ENCODE measurements at regions of chr17 and their contacts with region 1.

Region 1: DNA sequence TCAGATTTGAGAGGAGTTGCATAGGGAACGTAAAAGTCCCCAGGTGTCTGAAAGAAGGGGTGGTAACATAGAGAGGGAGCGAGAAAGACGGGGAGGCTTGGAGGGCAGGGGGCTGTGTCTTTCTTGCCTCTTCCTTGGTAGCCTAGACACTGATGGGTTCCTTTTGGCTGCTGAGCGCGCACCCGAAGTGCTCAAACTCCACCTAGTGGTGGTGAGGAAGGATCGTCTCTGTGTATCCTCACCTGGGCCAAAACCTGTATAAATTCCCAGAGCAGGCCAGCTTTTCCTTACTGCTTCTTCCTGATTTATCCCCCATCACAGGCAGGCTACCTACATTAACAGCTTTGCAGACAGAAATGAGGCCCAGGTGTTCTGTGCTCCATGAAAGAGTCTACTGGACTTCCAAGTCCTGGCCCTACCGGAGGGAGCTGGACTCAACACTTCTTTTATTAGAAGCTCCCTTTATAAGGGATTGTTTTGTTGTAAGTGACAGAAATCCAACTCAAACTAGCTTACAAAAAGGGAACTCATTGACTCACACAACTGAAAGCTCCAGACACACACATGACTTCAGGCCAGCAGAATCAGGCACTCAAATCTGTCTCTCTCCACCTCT is 5.5 kb upstream of the SLC25A35 start:
- DNase-seq: peak; percentile 52 to 60
- H3K4me3 ChIP-seq: no peak overlapping the region
- H3K27ac ChIP-seq: no peak overlapping the region
- H3K4me1 ChIP-seq: peaks cover 0 to 3% of the 10 kb centered on the region in 2 donors
- H3K27me3 ChIP-seq: no peaks in the 10 kb centered on the region
- CTCF ChIP-seq: peak; percentile 48 to 89 (median 78)
- POLR2A ChIP-seq: no peak

Region 2: DNA sequence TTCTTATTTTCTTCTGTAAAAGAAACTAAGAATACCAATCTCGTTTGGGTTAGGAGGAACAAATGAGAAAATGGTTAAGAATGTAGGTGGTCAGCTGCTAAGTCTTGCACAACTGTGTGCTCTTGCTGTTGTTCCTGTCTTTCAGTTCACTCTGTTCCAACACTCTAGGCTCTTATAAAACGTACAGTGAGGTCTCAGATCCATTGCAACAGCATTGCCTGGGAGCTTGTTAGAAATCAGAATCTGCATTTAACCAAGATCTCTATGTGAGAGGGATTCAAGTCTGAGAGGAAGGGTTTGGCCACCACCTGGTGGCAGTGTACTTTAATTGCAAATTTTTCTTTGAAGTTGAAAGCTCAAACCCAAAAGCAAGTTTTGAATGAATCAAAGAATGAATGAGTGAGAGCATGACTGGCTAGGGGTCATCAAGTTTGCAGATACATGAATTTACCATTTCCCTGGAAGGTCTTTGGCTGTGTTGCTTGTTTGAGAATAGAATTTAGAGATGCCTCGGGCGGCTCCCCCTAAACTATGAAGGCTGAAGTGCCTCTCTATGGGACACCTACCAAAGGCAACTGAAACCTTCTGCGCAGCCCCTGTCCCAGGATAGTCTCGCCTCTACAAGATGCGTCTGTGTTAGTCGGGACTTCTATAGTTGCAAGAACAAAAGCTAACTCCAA is 259.3 kb before region 1 on chr17:
- intact Hi-C with region 1: no loop called
- DNase-seq: peak; percentile 19 to 26
- H3K4me3 ChIP-seq: no peak overlapping the region
- H3K27ac ChIP-seq: peak overlapping the region in 1 of 3 donors; percentile 29
- H3K4me1 ChIP-seq: no peaks in the 10 kb centered on the region
- H3K27me3 ChIP-seq: peaks cover 7% of the 10 kb centered on the region
- CTCF ChIP-seq: peak in 4 of 6 experiments; percentile 45 to 52 (median 48)
- POLR2A ChIP-seq: no peak

Region 3: DNA sequence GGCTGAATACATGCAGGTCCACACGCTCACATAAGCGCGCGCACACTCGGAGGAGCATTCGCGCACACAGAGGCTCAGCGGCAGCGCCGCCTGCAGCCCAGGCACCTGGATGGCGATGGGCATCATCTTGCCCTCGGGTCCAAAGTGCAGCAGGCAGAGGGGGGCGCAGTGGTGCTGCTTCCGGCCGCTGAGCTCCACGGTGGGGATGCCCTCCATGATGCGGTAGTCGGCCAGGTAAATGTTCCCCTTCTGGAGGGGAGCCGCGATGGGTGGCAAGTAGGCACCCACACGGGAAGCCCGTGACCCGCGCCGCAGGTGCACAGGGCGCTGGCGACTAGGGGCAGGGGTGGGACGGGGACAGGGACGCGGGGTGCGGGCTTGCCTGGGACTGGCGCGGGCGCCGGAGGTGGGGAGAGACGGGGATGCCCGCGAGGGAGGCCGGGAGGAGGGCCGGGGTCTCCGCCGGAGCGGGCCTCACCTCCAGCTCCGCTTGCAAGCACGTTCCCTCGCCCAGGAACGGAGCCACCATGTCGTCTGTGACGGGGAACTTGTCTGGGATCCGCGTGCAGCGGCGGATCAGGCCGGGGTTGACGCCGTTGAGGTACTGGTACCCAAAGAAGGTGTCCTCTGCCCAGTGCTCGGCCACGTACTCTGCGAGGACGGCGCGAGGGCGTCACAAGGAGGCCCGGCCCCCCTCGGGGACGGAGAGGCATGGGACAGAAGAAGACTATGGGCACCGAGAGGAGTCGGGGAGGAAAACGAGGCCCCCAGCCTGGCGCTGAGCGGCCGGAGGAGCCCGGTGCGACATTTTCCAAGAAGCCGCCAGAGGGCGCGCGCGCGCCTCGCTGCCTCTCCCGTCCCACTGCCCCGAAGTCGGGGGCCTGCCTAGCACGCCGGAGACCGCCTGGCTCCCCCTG is 221.2 kb before region 1 on chr17:
- intact Hi-C with region 1: loop called (anchors 10 kb)
- DNase-seq: peak; percentile 62 to 64
- H3K4me3 ChIP-seq: peak overlapping the region in 1 of 3 donors; percentile 16
- H3K27ac ChIP-seq: no peak overlapping the region
- H3K4me1 ChIP-seq: peaks cover 0 to 14% of the 10 kb centered on the region in 2 donors
- H3K27me3 ChIP-seq: peaks cover 6% of the 10 kb centered on the region
- CTCF ChIP-seq: peak; percentile 53 to 93 (median 80)
- POLR2A ChIP-seq: no peak

Region 4: GRCh38 chr17:8253800-8254199 is 46.9 kb before region 1 on chr17:
- intact Hi-C with region 1: loop called (anchors 5 kb)
- DNase-seq: peak; percentile 21 to 40
- H3K4me3 ChIP-seq: no peak overlapping the region
- H3K27ac ChIP-seq: no peak overlapping the region
- H3K4me1 ChIP-seq: peaks cover 6 to 8% of the 10 kb centered on the region in 2 donors
- H3K27me3 ChIP-seq: no peaks in the 10 kb centered on the region
- CTCF ChIP-seq: peak in 2 of 6 experiments; percentile 17
- POLR2A ChIP-seq: no peak

Measured in thyroid gland (tissue), 4 donors.